Uterus (tissue), 4 donors: ENCODE measurements at regions of chr1 and their contacts with region 1.

Region 1: GRCh38 chr1:154220071-154220969 is at the start of gene UBAP2L:
- DNase-seq: peak; percentile 98 to 99
- H3K4me3 ChIP-seq: peak within 1 kb of the TSS; percentile 84 to 94
- H3K27ac ChIP-seq: peak within 1 kb of the TSS; percentile 99
- H3K4me1 ChIP-seq: peaks cover 8 to 19% of the 10 kb centered on the region in 2 donors
- H3K27me3 ChIP-seq: no peaks in the 10 kb centered on the region
- CTCF ChIP-seq: peak in 2 of 4 experiments; percentile 15 to 18
- POLR2A ChIP-seq: peak; percentile 85 to 89
- total RNA-seq, gene UBAP2L: 11.5 to 161 (median 52.0) TPM

Region 2: DNA sequence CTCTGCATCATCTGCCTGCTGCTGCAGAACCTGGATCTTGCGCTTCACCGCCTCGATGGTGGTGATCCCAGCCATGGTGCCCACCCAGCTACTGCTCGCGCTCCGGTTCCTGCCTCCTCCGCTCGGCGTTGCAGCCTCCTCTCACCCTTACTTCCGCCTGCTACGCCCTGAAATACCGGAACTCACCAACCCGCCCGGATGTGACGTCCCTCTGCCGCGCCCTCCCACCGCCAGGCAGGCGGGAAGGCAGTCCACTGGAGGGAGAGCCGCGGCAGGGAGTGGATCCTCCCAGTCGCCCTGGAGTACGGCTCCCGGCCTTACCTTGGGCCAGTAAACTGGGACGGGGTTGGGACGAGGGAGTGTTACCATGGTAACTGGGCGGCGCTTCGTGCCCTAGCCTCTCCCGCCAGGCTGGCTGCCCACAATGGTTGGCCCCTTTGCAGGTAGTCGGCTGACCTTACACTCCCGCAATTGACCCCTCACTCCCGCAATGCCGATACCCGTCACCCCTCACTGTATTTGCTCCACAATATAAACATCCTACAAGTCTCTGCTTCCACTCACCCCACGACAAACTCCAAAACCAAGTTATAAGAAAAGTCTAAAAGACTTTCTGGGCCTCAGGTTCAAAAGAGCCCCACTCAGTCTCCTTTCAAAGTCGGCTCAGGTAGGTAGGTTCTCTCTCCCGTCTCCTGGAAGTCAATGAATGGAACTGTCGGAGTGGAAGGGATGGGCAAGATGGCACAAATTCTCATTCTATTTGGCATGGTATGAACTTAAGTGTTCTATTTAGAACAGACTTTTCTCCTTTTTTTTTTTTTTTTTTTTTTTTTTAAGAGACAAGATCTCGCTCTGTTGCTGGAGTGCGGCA is 37.0 kb before region 1 on chr1:
- intact Hi-C with region 1: loop called (anchors 1 kb)
- DNase-seq: peak; percentile 95 to 97
- H3K4me3 ChIP-seq: peak overlapping the region; percentile 74 to 88
- H3K27ac ChIP-seq: peak overlapping the region; percentile 79 to 87
- H3K4me1 ChIP-seq: peaks cover 14 to 15% of the 10 kb centered on the region in 2 donors
- H3K27me3 ChIP-seq: no peaks in the 10 kb centered on the region
- CTCF ChIP-seq: peak in 3 of 4 experiments; percentile 29 to 64 (median 34)
- POLR2A ChIP-seq: peak; percentile 99

Region 3: DNA sequence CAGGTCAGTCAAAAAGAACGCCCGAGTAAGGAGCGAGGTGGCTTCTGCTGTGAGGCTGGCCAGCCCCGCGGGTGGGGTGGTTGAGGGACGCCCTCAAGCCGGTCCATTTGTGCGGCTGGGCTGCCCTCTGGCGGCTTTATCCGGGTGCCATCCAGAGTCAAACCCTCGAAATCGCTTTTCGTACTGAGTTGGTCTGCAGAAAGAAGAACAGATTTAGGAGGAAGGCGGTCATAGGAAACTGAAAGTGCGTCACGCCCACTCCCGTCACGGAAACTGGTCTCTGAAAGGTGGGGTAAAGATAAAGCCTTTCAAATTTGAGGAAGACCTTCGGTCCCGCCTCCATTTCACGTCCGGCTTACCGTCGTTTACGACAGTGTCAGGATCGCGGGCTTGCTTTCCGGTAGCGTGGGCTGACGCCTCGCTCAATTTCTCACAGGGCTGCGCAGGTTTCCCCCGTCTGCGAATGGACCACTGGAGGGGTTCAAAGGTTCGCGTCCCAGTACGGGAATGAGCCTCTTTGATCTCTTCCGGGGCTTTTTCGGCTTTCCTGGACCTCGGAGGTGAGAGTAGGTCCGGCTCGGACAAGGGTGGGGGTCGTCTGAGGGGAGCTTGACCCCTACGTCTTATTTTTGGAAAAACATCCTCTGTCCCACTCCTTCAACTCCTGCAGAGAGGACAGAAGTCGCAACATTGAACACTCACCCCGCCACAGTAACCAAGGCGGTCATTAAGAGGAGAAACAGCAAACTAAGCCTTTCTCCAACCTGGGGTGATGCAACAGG is 52.1 kb after region 1 on chr1 and contains the start of gene HAX1:
- intact Hi-C with region 1: no loop called
- DNase-seq: peak; percentile 95 to 96
- H3K4me3 ChIP-seq: peak within 1 kb of the TSS; percentile 76 to 81
- H3K27ac ChIP-seq: peak within 1 kb of the TSS; percentile 93 to 95
- H3K4me1 ChIP-seq: peaks cover 0 to 7% of the 10 kb centered on the region in 2 donors
- H3K27me3 ChIP-seq: no peaks in the 10 kb centered on the region
- CTCF ChIP-seq: peak; percentile 77 to 88 (median 84)
- POLR2A ChIP-seq: peak; percentile 69 to 73
- total RNA-seq, gene HAX1: 50.5 to 78.8 (median 69.4) TPM

Region 4: DNA sequence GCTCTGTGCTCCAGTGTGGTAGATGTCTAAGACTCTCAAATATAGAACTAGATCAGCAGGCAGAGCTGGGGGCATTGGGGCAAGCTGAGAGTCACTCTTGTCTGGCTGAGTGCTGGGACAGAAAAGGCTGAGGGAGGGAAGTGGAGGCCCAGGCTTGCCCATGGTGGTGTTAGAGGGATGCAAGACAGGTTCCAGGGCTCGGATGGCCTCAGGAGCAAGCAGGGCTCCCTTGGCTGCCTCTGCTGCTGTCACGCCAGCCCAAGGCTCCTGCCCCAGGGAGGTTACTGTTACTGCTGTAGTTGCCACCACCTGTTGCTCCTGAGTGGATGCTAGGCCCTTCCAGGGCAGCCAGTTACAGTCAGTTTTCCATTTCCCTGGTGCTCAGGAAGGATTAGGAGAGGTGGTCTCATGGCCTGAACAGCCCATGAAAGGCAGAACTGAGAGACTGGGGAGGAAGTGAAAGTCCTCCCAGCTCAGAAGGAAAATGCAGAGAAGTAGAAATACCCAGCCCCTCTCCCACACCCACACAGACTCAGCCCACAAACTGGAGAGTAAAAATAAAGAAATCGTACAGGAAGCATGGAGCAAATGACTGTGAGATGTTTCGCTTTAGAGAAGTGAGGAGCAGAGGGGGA is 186.8 kb after region 1 on chr1:
- intact Hi-C with region 1: no loop called
- DNase-seq: no peak
- H3K4me3 ChIP-seq: peak overlapping the region in 1 of 2 donors; percentile 90
- H3K27ac ChIP-seq: peak overlapping the region; percentile 96 to 98
- H3K4me1 ChIP-seq: peaks cover 15 to 16% of the 10 kb centered on the region in 2 donors
- H3K27me3 ChIP-seq: no peaks in the 10 kb centered on the region
- CTCF ChIP-seq: no peak
- POLR2A ChIP-seq: no peak